IMR-90 (cell line): ENCODE measurements at regions of chr17 and their contacts with region 1.

Region 1: DNA sequence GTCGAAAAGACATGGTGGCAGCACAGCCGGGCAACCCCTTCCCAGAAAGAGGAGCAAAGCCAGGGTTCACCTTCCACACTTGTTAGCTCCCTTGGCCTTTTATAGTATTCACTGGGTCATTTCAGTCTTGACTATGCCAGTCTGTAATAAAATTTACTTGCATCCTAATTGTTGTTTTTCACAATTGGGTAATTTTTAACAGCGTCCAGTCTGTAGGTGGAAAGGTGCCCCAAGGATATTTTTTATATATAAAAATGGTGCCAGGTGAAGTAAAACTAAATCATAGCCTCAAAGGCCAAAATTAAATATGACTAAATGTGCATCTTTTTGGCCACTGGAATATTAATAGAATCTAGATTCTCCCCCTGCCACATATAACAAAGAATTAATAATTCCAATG is at the start of gene KRT26:
- DNase-seq: no peak
- ATAC-seq: no peak
- H3K4me3 ChIP-seq: no peak within 1 kb of the TSS
- H3K27ac ChIP-seq: no peak within 1 kb of the TSS
- H3K4me1 ChIP-seq: no peaks in the 10 kb centered on the region
- H3K27me3 ChIP-seq: peaks cover 38% of the 10 kb centered on the region
- CTCF ChIP-seq: no peak
- POLR2A ChIP-seq: no peak
- RAD21 ChIP-seq: no peak
- total RNA-seq, gene KRT26: not detected in 2 replicates

Region 2: GRCh38 chr17:40671282-40671681 is 100.8 kb before region 1 on chr17:
- CTCF ChIA-PET with region 1: no interaction called
- POLR2A ChIA-PET with region 1: no interaction called
- dilution Hi-C with region 1: no loop called
- in situ Hi-C with region 1: no loop called
- intact Hi-C with region 1: loop called (anchors 5 kb)
- DNase-seq: no peak
- ATAC-seq: no peak
- H3K4me3 ChIP-seq: no peak overlapping the region
- H3K27ac ChIP-seq: no peak overlapping the region
- H3K4me1 ChIP-seq: no peaks in the 10 kb centered on the region
- H3K27me3 ChIP-seq: peaks cover 39% of the 10 kb centered on the region
- CTCF ChIP-seq: no peak
- POLR2A ChIP-seq: no peak
- RAD21 ChIP-seq: no peak